ENCODE measurements at regions of chr10 and their contacts with region 1.

Region 1: DNA sequence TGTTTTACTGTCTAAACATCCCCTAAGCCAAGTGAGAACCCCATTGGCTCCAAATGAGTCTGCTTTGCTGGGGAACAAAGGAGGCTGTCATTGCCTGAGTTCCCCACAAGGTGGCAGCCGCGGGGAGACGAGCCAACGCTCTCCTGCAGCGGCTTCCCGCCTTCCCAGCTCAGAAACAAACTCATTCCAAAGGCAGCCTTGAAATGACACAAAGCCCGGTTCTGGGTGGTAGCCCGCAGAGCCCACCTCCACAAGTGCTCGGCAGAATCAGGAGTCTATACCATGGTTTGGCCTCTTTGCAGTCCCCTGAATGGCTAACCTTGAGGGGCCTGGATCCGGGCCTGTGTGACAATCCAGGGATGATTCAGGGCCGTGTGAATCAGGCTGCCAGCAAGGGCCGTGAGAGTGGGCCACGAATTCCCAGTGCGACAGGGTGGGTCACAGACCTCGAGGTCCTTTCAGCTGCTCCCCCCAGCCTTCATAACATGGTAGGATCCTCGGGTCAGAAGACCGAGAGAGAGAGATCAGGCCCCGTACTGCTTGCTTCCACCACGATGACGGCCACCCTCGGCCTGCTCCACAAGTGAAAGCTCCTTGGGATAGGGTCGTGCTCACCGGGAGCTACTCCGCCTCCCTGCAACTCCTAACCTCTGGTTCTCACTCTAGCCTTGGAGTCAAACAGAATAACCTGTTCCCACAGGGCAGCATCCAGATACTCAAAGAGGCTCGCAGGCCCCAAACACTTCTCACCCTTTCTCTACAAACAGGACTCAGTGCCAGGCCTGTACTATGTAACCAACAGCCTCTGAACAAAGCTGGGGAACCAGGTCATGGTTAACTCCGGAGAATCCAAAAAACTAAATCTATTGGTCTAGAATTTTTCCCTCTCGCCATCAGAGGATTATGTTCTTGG is 79.6 kb downstream of the DLG5 start:
- DNase-seq: peak; percentile 73
- H3K27ac ChIP-seq: peak overlapping the region; percentile 83
- CTCF ChIP-seq: peak; percentile 95

Region 2: DNA sequence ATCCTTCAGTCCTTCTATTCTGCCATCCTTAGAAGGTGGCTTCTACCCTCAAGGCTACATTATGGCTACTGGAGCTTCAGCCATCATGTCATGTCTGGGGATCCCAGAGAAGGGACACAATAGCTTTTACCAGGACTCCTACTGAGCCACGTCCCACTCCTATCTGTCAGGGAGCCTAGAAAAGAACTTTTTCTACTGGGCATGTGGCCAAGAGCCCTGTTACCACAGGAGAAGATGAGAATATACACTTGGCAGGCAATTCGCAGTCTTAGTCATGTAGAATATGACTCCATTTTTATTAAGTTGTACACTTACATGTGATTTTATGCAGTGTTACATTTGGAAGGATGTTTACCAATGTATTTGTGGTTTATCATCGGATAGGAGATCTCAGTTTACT is 144.8 kb before region 1 on chr10:
- CTCF ChIA-PET with region 1: no interaction called
- POLR2A ChIA-PET with region 1: no interaction called
- DNase-seq: peak; percentile 73
- H3K27ac ChIP-seq: no peak overlapping the region
- CTCF ChIP-seq: no peak

Region 3: GRCh38 chr10:77832238-77832637 is 14.7 kb before region 1 on chr10:
- CTCF ChIA-PET with region 1: interaction called, 10 read pairs
- POLR2A ChIA-PET with region 1: no interaction called
- DNase-seq: no peak
- H3K27ac ChIP-seq: peak overlapping the region; percentile 56
- CTCF ChIP-seq: no peak

Region 4: DNA sequence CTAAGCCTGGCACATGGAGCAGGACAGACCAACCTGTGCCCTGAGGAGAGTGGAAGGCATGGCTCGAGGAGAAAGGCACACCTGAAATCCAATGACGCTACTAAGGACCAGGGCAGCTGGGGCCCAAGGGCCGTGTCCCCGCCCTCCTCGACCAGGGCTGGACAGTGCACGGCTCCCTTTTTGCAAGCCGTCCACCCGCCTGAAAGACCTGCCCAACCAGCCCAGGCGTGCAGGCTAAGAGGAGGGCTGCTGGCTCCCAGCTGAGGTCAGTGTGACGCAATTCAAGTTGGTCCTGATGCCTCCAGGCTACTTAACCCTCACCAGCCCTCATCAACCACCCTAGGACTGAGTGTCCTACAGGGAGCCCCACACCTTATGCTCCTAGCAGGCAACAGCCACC is 10.3 kb after region 1 on chr10:
- CTCF ChIA-PET with region 1: interaction called, 13 read pairs
- POLR2A ChIA-PET with region 1: no interaction called
- DNase-seq: peak; percentile 41
- H3K27ac ChIP-seq: peak overlapping the region; percentile 63
- CTCF ChIP-seq: no peak

Measured in RWPE1 (cell line).